Caco-2 (cell line): ENCODE measurements at regions of chr13 and their contacts with region 1.

Region 1: DNA sequence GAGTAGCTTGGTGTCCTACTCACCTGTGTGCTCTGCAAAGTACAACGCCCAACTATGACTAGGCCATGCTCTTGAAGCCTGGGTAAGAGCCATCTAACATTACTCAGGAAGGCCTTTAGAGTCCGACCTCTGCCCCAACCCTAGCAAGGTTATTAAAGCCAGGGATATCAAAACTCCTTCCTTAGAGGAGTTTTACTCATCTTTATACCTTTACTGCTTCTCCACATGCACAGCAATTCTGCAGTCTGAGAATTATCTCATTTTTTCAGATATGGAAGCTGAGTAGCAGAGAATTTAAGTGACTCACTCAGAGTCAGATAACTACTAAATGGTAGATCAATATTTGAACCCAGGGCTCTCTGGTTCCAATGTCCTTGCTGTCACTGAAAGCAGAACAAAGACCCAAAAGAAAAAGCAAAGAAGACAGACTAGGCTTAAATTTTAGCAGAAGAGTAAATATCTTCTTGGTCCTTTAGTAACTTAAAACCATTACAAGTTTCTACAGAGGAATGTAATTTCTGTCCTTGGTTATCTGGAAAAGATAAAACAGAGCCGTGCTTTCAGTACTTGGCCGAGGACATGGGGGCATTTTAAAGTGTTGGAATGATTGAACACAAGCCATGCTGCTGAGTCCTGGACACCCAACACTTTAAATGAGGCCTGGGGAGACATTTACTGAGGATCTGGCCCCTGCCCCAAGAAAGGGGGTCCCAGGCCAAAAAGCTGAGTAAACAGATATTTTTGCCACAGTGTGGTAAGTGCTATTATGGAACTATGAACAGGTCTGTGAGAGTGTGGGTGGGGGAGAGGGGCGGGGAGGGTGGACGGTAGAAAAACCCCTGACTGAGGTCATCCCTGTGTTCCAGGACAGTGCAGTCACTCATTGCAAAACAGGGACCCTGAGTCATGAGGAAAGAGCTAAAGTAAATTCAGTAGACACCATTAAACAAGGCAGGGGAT is 18.4 kb upstream of the KPNA3 start:
- DNase-seq: peak; percentile 76 to 89
- H3K4me3 ChIP-seq: no peak overlapping the region; the same call in 1 of the 2 replicates
- H3K4me3 Mint-ChIP-seq: peak overlapping the region; percentile 63
- H3K27ac Mint-ChIP-seq: peak overlapping the region; percentile 91
- H3K4me1 ChIP-seq: peaks cover 90% of the 10 kb centered on the region
- H3K4me1 Mint-ChIP-seq: peaks cover 49% of the 10 kb centered on the region
- H3K27me3 ChIP-seq: no peaks in the 10 kb centered on the region
- H3K27me3 Mint-ChIP-seq: no peaks in the 10 kb centered on the region
- CTCF ChIP-seq: no peak

Region 2: DNA sequence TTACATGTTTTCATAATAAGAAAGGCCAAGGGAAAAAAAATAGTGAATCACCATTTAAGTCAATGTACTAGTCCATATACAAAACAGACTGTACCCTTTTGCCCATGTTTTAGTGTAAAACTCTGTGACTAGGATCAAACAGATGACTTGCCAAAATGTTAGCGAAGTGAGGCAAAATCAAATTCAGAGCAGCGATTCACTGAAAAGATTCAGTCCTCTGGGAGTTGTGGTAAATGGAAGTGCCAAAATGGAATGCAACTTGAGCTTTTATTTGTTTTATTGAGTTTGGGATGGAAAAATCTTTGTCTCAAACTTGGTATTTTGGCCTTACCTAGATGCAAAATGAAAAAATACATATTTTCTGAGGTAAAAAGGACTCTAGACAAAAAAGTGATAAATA is 554.0 kb before region 1 on chr13:
- CTCF ChIA-PET with region 1: no interaction called
- POLR2A ChIA-PET with region 1: no interaction called
- intact Hi-C with region 1: no loop called
- DNase-seq: no peak
- H3K4me3 ChIP-seq: no peak overlapping the region
- H3K4me3 Mint-ChIP-seq: no peak overlapping the region
- H3K27ac Mint-ChIP-seq: no peak overlapping the region
- H3K4me1 ChIP-seq: no peaks in the 10 kb centered on the region
- H3K4me1 Mint-ChIP-seq: no peaks in the 10 kb centered on the region
- H3K27me3 ChIP-seq: no peaks in the 10 kb centered on the region
- H3K27me3 Mint-ChIP-seq: no peaks in the 10 kb centered on the region
- CTCF ChIP-seq: no peak

Region 3: DNA sequence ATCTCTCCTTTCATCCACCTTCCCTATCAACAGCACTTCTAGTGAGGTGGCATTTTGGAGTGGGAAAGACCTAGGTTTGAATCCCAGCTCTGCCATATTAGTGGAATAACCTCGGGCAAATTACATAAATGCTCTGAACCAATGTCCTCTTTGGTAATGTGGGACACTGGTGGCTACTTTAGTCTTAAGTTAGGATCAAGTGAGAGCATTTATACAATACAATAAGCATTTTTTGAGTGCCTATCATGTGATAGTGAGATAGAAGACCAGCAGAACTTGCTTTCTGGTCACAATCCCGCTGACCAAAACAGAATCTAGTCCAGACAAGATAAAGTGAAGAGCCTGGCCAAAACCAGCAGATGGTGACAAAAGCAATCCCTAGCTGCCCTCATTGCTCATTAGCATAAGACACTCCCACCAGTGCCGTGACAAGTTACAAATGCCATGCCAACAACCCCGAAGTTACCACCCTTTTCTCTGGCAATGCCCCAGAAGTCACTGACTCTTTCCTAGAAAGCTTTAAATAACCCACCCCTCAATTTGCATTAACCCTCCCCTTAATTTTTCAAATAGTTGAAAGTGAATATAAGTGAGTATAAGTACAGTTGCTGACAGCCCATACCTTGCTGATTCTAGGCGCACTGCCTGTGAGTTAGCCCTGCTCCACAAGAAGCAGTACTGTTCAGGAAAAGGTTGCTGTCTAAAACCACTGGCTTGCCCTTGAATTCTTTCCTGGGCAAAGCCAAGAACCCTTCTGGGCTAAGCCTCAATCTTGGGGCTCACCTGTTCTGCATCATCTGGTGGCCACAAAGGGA is 10.6 kb after region 1 on chr13:
- CTCF ChIA-PET with region 1: interaction called, 5 read pairs
- POLR2A ChIA-PET with region 1: interaction called, 3 read pairs
- intact Hi-C with region 1: loop called (anchors 1 kb)
- DNase-seq: no peak
- H3K4me3 ChIP-seq: no peak overlapping the region
- H3K4me3 Mint-ChIP-seq: no peak overlapping the region
- H3K27ac Mint-ChIP-seq: peak overlapping the region; percentile 29
- H3K4me1 ChIP-seq: peaks cover 32% of the 10 kb centered on the region
- H3K4me1 Mint-ChIP-seq: peaks cover 29% of the 10 kb centered on the region
- H3K27me3 ChIP-seq: no peaks in the 10 kb centered on the region
- H3K27me3 Mint-ChIP-seq: no peaks in the 10 kb centered on the region
- CTCF ChIP-seq: no peak

Region 4: DNA sequence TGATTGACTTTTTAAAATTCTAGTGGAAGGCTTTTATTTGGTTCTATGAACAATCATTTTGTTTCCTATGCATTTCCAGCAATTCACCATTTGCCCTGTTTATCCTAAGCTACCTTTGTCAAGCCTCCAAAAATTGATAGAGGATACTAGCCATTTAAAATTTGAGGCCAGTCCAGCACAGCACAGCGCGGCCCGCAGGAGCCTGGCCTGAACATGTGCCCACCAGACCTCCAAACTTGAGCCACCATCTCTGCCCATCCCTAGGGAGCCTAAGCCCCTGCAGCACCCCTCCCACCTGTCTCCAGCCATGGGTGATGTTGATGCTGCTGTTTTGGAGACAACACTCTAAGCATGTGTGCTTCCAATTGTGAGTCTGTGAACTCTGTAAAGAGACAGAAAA is 67.8 kb after region 1 on chr13:
- CTCF ChIA-PET with region 1: no interaction called
- POLR2A ChIA-PET with region 1: no interaction called
- intact Hi-C with region 1: no loop called
- DNase-seq: no peak
- H3K4me3 ChIP-seq: no peak overlapping the region
- H3K4me3 Mint-ChIP-seq: no peak overlapping the region
- H3K27ac Mint-ChIP-seq: no peak overlapping the region
- H3K4me1 ChIP-seq: peaks cover 7% of the 10 kb centered on the region; the same call in 1 of the 2 replicates
- H3K4me1 Mint-ChIP-seq: no peaks in the 10 kb centered on the region
- H3K27me3 ChIP-seq: no peaks in the 10 kb centered on the region
- H3K27me3 Mint-ChIP-seq: no peaks in the 10 kb centered on the region
- CTCF ChIP-seq: no peak